Caco-2 (cell line): ENCODE measurements at regions of chr1 and their contacts with region 1.

Region 1: DNA sequence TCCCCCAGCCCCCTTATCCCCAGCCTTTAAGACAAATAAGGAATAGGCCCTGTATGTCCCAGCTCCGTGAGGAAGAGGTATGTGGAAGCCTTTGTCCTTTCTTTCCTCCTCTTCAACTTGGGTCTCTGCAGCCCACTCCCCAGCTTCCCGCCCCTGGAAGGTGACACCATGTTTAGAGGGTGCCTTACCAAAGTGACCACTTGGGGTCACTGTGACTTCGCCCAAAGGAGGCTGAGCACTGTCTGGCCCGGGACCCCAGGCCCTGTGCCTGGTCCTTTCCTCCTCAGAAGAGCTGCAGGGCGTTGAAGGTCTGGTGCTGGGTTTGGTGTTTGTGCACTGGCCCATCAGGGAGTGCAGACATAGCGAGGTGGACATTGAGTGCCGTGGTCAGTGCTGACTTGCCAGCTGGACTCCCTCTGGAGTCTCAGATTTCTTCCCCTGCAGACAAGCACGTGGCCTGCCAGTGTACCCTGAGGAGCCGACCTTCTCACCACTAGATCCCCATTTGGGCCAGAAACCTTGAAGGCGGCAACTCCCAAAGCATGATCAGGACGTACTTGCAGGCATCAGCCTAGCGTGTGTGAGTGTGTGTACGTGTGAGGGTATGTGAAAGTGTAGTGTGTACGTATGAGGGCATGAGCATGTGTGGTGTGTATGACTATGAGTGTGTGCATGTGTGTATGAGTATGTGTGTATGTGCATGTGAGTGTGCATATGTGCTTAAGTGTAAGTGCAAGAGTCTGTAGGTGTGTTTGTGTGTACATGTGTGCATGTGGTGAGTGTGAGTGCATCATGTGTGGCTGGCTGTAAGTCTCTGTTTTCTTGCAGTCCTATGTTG is 181.4 kb upstream of the KIAA0040 start:
- DNase-seq: peak; percentile 50 to 65
- H3K4me3 ChIP-seq: no peak overlapping the region
- H3K4me3 Mint-ChIP-seq: no peak overlapping the region
- H3K27ac Mint-ChIP-seq: no peak overlapping the region
- H3K4me1 ChIP-seq: peaks cover 5% of the 10 kb centered on the region; the same call in 1 of the 2 replicates
- H3K4me1 Mint-ChIP-seq: peaks cover 7% of the 10 kb centered on the region
- H3K27me3 ChIP-seq: no peaks in the 10 kb centered on the region
- H3K27me3 Mint-ChIP-seq: no peaks in the 10 kb centered on the region
- CTCF ChIP-seq: peak; percentile 86 to 87

Region 2: GRCh38 chr1:175434283-175434860 is 60.4 kb after region 1 on chr1:
- CTCF ChIA-PET with region 1: no interaction called
- POLR2A ChIA-PET with region 1: no interaction called
- intact Hi-C with region 1: loop called (anchors 2 kb)
- DNase-seq: peak in 1 of 2 experiments; percentile 12
- H3K4me3 ChIP-seq: no peak overlapping the region
- H3K4me3 Mint-ChIP-seq: no peak overlapping the region
- H3K27ac Mint-ChIP-seq: no peak overlapping the region
- H3K4me1 ChIP-seq: no peaks in the 10 kb centered on the region
- H3K4me1 Mint-ChIP-seq: no peaks in the 10 kb centered on the region
- H3K27me3 ChIP-seq: no peaks in the 10 kb centered on the region; the same call in 1 of the 2 replicates
- H3K27me3 Mint-ChIP-seq: peaks cover 16% of the 10 kb centered on the region
- CTCF ChIP-seq: no peak

Region 3: DNA sequence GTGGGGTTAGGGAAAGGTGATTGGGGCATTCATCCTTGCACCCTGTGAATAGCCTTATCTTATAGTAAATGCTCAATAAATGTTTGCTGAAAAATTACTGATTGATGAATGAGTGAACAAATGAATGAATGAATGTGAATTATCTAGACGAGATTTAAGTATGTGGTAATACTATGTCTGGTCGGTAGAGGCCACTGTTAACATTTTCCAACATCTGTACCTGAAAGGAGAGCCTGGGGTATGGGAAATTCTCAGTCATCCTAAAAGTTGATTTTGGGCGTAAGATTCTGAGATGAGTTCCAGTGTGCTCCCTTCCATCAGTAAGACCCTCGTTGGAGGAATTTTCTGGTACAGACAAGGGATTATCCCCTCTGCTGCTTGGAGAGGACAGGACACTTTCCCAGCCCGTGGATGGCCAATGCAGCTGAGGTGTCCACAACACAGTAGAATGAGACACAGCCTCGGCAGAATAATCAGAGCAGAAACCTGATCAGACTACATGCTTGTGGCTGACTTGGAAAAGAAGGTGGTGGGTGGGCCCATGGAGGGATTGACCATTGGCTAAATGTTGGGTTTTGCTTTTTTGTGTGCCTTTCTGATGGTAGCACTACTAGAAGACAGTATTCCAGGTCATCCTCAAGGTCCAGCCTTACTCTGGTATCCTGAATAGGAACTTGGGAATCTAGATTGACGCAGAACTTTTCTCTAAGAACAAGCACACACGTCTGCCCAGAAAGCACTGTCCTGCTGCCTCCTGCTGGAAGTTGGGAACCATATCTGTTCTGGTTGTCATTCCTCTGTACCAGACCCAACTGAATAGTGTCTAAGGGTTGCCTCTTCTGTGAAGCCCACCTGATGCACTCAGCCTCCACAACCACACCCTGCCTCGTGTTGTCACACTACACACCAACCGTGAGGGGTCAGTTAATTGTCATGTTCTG is 107.4 kb after region 1 on chr1:
- CTCF ChIA-PET with region 1: no interaction called
- POLR2A ChIA-PET with region 1: no interaction called
- intact Hi-C with region 1: loop called (anchors 2 kb)
- DNase-seq: peak in 1 of 2 experiments; percentile 24
- H3K4me3 ChIP-seq: no peak overlapping the region
- H3K4me3 Mint-ChIP-seq: no peak overlapping the region
- H3K27ac Mint-ChIP-seq: no peak overlapping the region
- H3K4me1 ChIP-seq: no peaks in the 10 kb centered on the region
- H3K4me1 Mint-ChIP-seq: no peaks in the 10 kb centered on the region
- H3K27me3 ChIP-seq: no peaks in the 10 kb centered on the region; the same call in 1 of the 2 replicates
- H3K27me3 Mint-ChIP-seq: peaks cover 17% of the 10 kb centered on the region
- CTCF ChIP-seq: peak; percentile 48 to 53

Region 4: GRCh38 chr1:175742790-175743459 is 368.9 kb after region 1 on chr1:
- CTCF ChIA-PET with region 1: interaction called, 3 read pairs
- POLR2A ChIA-PET with region 1: no interaction called
- intact Hi-C with region 1: loop called (anchors 1 kb)
- DNase-seq: peak in 1 of 2 experiments; percentile 46
- H3K4me3 ChIP-seq: no peak overlapping the region
- H3K4me3 Mint-ChIP-seq: no peak overlapping the region
- H3K27ac Mint-ChIP-seq: no peak overlapping the region
- H3K4me1 ChIP-seq: no peaks in the 10 kb centered on the region
- H3K4me1 Mint-ChIP-seq: peaks cover 13% of the 10 kb centered on the region
- H3K27me3 ChIP-seq: no peaks in the 10 kb centered on the region
- H3K27me3 Mint-ChIP-seq: peaks cover 12% of the 10 kb centered on the region
- CTCF ChIP-seq: no peak